ENCODE measurements at regions of chr6 and their contacts with region 1.

Region 1: DNA sequence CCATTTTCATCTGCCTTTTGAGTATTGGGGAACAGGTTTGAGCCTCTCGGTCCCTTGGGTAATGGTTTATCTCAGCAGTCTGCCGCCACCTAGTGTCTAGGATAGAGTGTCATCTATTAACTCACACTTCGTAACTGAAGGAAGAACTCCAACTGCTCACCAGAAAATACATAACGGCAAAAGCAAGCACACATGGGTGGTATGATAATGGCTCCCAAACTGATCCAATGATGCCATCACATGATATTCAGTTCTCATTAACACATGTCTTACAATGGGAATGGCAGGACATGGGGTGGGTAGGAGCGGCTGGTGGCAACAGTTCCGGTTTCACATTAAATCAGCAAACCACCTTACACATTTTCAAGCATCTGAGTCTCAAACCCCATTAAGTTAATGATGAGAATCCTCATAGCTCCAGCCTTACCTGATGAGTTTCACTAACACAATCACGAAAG is 110.7 kb upstream of the PHACTR1 start:
- DNase-seq: peak; percentile 61 to 71
- H3K4me3 ChIP-seq: no peak overlapping the region
- H3K4me3 Mint-ChIP-seq: no peak overlapping the region
- H3K27ac Mint-ChIP-seq: no peak overlapping the region
- H3K4me1 ChIP-seq: peaks cover 19% of the 10 kb centered on the region
- H3K4me1 Mint-ChIP-seq: peaks cover 15% of the 10 kb centered on the region
- H3K27me3 ChIP-seq: no peaks in the 10 kb centered on the region
- H3K27me3 Mint-ChIP-seq: no peaks in the 10 kb centered on the region
- CTCF ChIP-seq: peak; percentile 71 to 72

Region 2: GRCh38 chr6:11585426-11586016 is 1020.4 kb before region 1 on chr6:
- CTCF ChIA-PET with region 1: no interaction called
- POLR2A ChIA-PET with region 1: no interaction called
- intact Hi-C with region 1: loop called (anchors 2 kb)
- DNase-seq: peak in 1 of 2 experiments; percentile 60
- H3K4me3 ChIP-seq: no peak overlapping the region
- H3K4me3 Mint-ChIP-seq: no peak overlapping the region
- H3K27ac Mint-ChIP-seq: peak overlapping the region; percentile 59
- H3K4me1 ChIP-seq: peaks cover 46% of the 10 kb centered on the region
- H3K4me1 Mint-ChIP-seq: peaks cover 43% of the 10 kb centered on the region
- H3K27me3 ChIP-seq: no peaks in the 10 kb centered on the region
- H3K27me3 Mint-ChIP-seq: no peaks in the 10 kb centered on the region
- CTCF ChIP-seq: peak; percentile 40 to 79

Region 3: GRCh38 chr6:12150812-12151432 is 455.0 kb before region 1 on chr6:
- CTCF ChIA-PET with region 1: no interaction called
- POLR2A ChIA-PET with region 1: no interaction called
- intact Hi-C with region 1: loop called (anchors 1 kb)
- DNase-seq: peak; percentile 52 to 71
- H3K4me3 ChIP-seq: no peak overlapping the region
- H3K4me3 Mint-ChIP-seq: no peak overlapping the region
- H3K27ac Mint-ChIP-seq: no peak overlapping the region
- H3K4me1 ChIP-seq: no peaks in the 10 kb centered on the region
- H3K4me1 Mint-ChIP-seq: no peaks in the 10 kb centered on the region
- H3K27me3 ChIP-seq: no peaks in the 10 kb centered on the region
- H3K27me3 Mint-ChIP-seq: no peaks in the 10 kb centered on the region
- CTCF ChIP-seq: peak; percentile 79 to 86

Region 4: DNA sequence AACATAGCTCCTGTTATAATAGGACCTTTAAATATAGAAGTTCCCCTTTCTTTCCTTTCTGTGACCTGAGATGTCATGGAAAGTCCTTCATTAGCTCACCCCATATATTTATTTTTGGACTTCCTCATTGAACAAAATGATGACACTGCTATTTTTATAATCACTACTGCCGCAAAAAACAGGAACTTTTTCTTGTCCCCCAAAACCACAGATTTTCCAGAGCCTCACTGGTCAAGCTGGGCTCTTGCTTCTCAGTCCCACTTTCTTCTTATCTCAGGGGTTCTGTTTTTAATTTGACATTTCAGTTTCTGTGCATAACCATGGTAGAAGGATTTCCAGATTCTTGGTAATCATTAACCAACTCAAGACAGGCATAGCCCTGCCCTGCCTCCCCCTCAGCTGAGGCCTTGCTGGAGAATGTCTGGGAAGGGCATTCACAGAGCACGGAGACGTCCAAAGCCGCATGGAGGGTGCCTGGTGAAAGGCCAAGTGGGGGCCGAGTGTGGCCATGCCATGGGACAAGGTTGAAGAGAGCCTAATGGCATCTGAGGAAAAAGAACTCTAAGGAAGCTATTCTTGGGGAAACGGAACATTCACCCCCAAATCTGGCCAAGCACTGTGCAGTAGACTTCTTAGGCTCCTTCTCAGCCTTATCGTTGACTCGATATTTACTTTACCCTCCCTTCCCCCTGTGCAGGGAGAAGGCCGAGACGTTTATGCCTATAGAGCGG is 242.1 kb before region 1 on chr6:
- CTCF ChIA-PET with region 1: interaction called, 6 read pairs
- POLR2A ChIA-PET with region 1: no interaction called
- intact Hi-C with region 1: loop called (anchors 10 kb)
- DNase-seq: peak; percentile 80 to 90
- H3K4me3 ChIP-seq: no peak overlapping the region
- H3K4me3 Mint-ChIP-seq: peak overlapping the region; percentile 65
- H3K27ac Mint-ChIP-seq: peak overlapping the region; percentile 95
- H3K4me1 ChIP-seq: peaks cover 75% of the 10 kb centered on the region
- H3K4me1 Mint-ChIP-seq: peaks cover 43% of the 10 kb centered on the region
- H3K27me3 ChIP-seq: no peaks in the 10 kb centered on the region
- H3K27me3 Mint-ChIP-seq: no peaks in the 10 kb centered on the region
- CTCF ChIP-seq: no peak

Region 5: DNA sequence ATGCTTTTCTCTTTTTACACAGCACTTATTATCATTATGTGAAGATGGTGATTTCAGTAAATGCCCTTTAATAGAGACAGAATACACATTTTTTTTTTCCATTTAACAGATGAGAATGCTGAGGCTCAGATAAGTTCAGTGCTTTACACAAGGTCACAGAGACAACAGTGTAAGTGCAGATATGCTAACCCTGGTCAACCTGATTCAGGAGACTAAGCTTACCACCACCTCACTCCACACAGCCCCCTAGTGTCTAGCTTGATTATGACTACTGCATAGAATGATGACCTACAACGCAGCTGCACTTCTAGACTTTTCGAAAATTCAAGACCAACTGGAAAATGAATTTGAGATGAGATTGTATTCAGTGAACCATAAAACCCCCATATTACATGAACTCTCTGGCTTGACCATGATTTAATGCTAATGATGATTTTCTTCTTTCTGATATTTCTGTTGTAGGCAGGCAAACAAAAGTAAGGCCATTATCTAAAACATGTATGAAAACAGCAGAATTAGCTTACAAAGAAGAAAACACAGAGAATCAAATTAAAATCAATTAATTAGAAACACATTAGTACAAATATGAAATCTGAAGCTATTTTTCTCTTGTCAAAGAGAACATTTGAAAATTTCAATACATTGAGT is 101.5 kb before region 1 on chr6:
- CTCF ChIA-PET with region 1: no interaction called
- POLR2A ChIA-PET with region 1: no interaction called
- intact Hi-C with region 1: loop called (anchors 5 kb)
- DNase-seq: peak in 1 of 2 experiments; percentile 55
- H3K4me3 ChIP-seq: no peak overlapping the region
- H3K4me3 Mint-ChIP-seq: no peak overlapping the region
- H3K27ac Mint-ChIP-seq: no peak overlapping the region
- H3K4me1 ChIP-seq: no peaks in the 10 kb centered on the region
- H3K4me1 Mint-ChIP-seq: peaks cover 7% of the 10 kb centered on the region
- H3K27me3 ChIP-seq: no peaks in the 10 kb centered on the region
- H3K27me3 Mint-ChIP-seq: no peaks in the 10 kb centered on the region
- CTCF ChIP-seq: peak; percentile 24 to 41

Region 6: DNA sequence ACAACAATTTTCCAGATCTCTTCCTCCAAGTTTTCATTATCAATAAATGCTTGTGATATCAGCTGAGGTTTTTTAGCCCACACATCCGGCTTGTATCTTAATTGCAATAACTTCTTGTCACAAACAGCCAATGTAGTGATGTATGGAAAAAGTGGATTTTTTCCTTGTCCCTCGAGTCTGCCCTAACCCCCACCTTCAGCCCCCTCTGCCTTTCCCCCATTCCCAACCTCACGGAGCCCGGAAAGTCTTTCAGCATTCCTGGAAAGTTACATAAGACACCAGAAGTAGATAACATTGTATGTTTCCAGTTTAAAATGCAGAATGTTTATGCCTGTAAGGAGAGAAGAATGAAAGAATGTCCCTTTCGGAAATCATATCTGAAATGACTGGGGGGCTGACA is 68.5 kb before region 1 on chr6:
- CTCF ChIA-PET with region 1: no interaction called
- POLR2A ChIA-PET with region 1: no interaction called
- intact Hi-C with region 1: no loop called
- DNase-seq: peak in 1 of 2 experiments; percentile 18
- H3K4me3 ChIP-seq: no peak overlapping the region
- H3K4me3 Mint-ChIP-seq: peak overlapping the region; percentile 26
- H3K27ac Mint-ChIP-seq: peak overlapping the region; percentile 62
- H3K4me1 ChIP-seq: peaks cover 26% of the 10 kb centered on the region
- H3K4me1 Mint-ChIP-seq: peaks cover 12% of the 10 kb centered on the region
- H3K27me3 ChIP-seq: no peaks in the 10 kb centered on the region
- H3K27me3 Mint-ChIP-seq: no peaks in the 10 kb centered on the region
- CTCF ChIP-seq: no peak

Region 7: DNA sequence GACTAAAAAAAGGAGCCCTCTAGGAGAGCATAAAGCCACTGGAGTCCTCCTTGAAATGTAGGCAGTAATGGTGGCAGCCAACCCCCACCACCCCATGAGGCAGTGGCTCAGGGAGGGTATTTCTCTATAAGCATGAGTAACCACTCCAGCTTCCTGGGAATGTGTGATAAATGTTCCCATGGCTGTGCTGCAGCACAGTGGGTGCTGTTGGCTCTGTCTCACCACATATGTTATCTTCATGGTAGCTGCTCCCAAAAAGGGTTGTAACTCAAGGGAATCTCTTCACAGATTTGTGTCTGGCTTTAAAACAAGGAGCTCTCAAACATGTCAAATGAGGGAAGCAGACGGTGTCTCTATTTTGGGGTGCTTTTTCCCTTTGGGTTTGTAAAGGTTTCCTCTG is 103.2 kb after region 1 on chr6:
- CTCF ChIA-PET with region 1: no interaction called
- POLR2A ChIA-PET with region 1: no interaction called
- intact Hi-C with region 1: no loop called
- DNase-seq: no peak
- H3K4me3 ChIP-seq: no peak overlapping the region
- H3K4me3 Mint-ChIP-seq: no peak overlapping the region
- H3K27ac Mint-ChIP-seq: no peak overlapping the region
- H3K4me1 ChIP-seq: no peaks in the 10 kb centered on the region
- H3K4me1 Mint-ChIP-seq: no peaks in the 10 kb centered on the region
- H3K27me3 ChIP-seq: no peaks in the 10 kb centered on the region
- H3K27me3 Mint-ChIP-seq: peaks cover 13% of the 10 kb centered on the region
- CTCF ChIP-seq: no peak